ENCODE measurements at regions of chr2 and their contacts with region 1.

Region 1: DNA sequence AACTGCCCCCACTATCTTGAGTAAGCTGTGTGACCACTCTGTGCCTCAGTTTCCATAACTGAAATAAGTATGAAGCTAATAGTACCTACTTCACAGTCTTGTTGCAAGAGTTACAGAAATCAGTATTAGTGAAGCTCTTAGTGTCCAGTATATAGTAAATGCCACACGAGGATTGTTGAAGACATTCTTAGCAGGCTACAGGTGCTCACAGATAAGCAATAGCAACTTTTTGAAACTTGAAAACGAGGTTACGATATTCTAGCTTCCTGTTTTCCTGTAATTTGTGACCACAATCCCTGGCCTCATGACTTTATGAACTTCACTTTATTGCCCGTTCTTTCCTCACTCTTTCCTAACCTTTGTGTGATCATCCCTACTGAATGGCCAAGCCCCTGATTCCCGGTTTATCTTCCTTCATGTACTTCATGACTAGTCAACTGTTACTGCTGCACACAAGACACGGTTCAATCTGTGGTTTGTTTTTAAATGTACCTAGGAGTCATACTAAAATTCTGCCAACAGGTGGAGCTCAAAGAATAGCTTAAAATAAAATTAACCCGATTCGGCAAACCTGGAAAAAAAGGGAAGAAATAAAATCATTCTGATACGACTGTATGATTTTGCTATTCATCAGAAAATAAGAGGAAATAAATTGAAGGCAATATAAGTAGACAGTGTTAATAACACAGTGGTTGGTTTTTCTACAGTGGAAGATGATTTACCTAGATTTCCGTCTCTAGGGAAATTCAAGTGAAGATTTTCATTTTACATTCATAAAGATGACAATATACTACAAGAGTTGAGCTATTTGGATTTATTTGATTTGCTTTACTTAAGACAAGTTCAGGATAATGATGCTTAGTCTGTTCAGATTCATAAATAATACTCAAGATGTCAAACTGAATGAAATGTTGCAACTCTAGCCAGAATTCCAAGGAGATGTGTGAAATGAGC is 38.1 kb upstream of the STAT1 start:
- DNase-seq: peak in 3 of 5 donors; percentile 14 to 81 (median 81)
- H3K4me3 ChIP-seq: no peak overlapping the region
- H3K27ac ChIP-seq: no peak overlapping the region
- H3K4me1 ChIP-seq: no peaks in the 10 kb centered on the region
- H3K27me3 ChIP-seq: no peaks in the 10 kb centered on the region
- CTCF ChIP-seq: peak; percentile 58

Region 2: GRCh38 chr2:191150600-191151330 is 98.7 kb after region 1 on chr2 and contains the start of gene STAT4:
- intact Hi-C with region 1: loop called (anchors 10 kb)
- DNase-seq: peak; percentile 66 to 89 (median 77)
- H3K4me3 ChIP-seq: peak within 1 kb of the TSS; percentile 59 to 79 (median 65)
- H3K27ac ChIP-seq: no peak within 1 kb of the TSS
- H3K4me1 ChIP-seq: peaks cover 0 to 3% (median 3%) of the 10 kb centered on the region in 3 donors
- H3K27me3 ChIP-seq: no peaks in the 10 kb centered on the region
- CTCF ChIP-seq: no peak
- total RNA-seq, gene STAT4: 8.5 TPM

Measured in kidney (tissue), 22 donors.